Left ventricle myocardium superior (tissue), 1 donor: ENCODE measurements at regions of chr2 and their contacts with region 1.

Region 1: DNA sequence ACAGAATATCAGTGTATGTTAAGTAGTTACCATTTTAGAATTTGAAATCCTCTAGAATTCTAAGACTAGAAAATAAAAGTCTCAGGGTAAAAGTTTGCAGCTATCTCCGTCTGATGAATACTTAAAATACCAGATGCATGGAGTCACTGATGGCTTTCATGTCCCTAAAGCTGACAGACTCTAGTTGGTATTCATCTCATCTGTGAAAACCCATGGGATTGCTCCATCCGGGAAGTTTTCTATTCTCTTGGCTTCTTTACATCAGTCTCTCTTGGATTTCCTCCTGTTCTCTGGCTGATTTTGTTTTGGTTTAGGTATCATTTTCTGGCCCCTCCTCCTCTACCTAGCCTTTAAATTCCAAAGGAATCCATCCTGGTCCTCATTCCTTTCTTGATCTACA is 465.6 kb upstream of the POU3F3 start:
- DNase-seq: no peak
- ATAC-seq: no peak

Region 2: GRCh38 chr2:103743195-103743594 is 645.1 kb before region 1 on chr2:
- intact Hi-C with region 1: loop called (anchors 10 kb)
- DNase-seq: no peak
- ATAC-seq: no peak

Region 3: DNA sequence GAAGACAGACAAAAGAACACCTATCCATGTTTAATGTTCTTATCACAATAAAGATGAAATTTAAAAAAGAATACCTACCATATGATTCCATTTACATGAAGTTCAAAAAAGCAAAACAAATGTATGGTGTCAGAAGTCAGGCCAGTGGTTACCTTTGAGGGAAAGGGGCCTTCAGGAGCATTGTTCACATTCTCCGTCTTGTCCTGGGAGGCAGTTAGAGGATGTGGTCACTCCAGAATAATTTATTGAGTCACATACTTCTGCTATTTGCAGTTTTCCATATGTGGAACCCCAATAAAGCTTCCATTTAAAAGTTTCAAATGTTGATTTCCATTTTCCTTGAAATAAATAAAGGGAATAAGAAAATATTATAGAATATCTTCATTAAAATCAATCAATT is 424.0 kb after region 1 on chr2:
- intact Hi-C with region 1: no loop called
- DNase-seq: no peak
- ATAC-seq: no peak